ENCODE measurements at regions of chr2 and their contacts with region 1.

Region 1: GRCh38 chr2:215793747-215794595 is 219.4 kb downstream of the MREG start:
- DNase-seq: peak; percentile 100
- ATAC-seq: peak; percentile 86
- H3K4me3 ChIP-seq: peak overlapping the region in 1 of 3 experiments; percentile 1; a peak in 1 of 6 replicates
- H3K27ac ChIP-seq: peak overlapping the region; percentile 85
- H3K4me1 ChIP-seq: peaks cover 77% of the 10 kb centered on the region
- H3K27me3 ChIP-seq: no peaks in the 10 kb centered on the region
- CTCF ChIP-seq: no peak
- EP300 ChIP-seq: peak; percentile 64 to 99; a peak in 3 of 4 replicates
- POLR2A ChIP-seq: 0 out of 4 replicates have a peak, but pooled peaks of 1 of the 2 experiments have one; percentile 25
- RAD21 ChIP-seq: no peak

Region 2: GRCh38 chr2:215418064-215418963 is 375.7 kb before region 1 on chr2:
- CTCF ChIA-PET with region 1: no interaction called
- POLR2A ChIA-PET with region 1: interaction called, 6 read pairs
- in situ Hi-C with region 1: no loop called
- intact Hi-C with region 1: loop called (anchors 5 kb)
- DNase-seq: peak; percentile 89
- ATAC-seq: peak; percentile 42
- H3K4me3 ChIP-seq: peak overlapping the region; percentile 3 to 31 (median 13); a peak in 2 of 6 replicates
- H3K27ac ChIP-seq: peak overlapping the region; percentile 77
- H3K4me1 ChIP-seq: peaks cover 100% of the 10 kb centered on the region
- H3K27me3 ChIP-seq: no peaks in the 10 kb centered on the region
- CTCF ChIP-seq: no peak
- EP300 ChIP-seq: peak; percentile 45 to 94; a peak in 3 of 4 replicates
- POLR2A ChIP-seq: peak in 1 of 2 experiments; percentile 28; a peak in 1 of 4 replicates
- RAD21 ChIP-seq: no peak

Region 3: GRCh38 chr2:215454519-215455246 is 339.3 kb before region 1 on chr2:
- CTCF ChIA-PET with region 1: no interaction called
- POLR2A ChIA-PET with region 1: no interaction called
- in situ Hi-C with region 1: no loop called
- intact Hi-C with region 1: loop called (anchors 1 kb)
- DNase-seq: peak; percentile 52
- ATAC-seq: peak; percentile 50
- H3K4me3 ChIP-seq: no peak overlapping the region
- H3K27ac ChIP-seq: no peak overlapping the region
- H3K4me1 ChIP-seq: peaks cover 17% of the 10 kb centered on the region
- H3K27me3 ChIP-seq: no peaks in the 10 kb centered on the region
- CTCF ChIP-seq: peak; percentile 75
- EP300 ChIP-seq: peak in 1 of 2 experiments; percentile 55; a peak in 2 of 4 replicates
- POLR2A ChIP-seq: no peak
- RAD21 ChIP-seq: peak; percentile 42; the same call in 1 of the 2 replicates

Region 4: GRCh38 chr2:215680605-215681598 is 113.1 kb before region 1 on chr2:
- CTCF ChIA-PET with region 1: no interaction called
- POLR2A ChIA-PET with region 1: interaction called, 22 read pairs
- in situ Hi-C with region 1: loop called (anchors 5 kb)
- intact Hi-C with region 1: loop called (anchors 1 kb)
- DNase-seq: peak; percentile 100
- ATAC-seq: peak; percentile 97
- H3K4me3 ChIP-seq: 0 out of 6 replicates have a peak overlapping the region, but pooled peaks of 1 of the 3 experiments have one; percentile 11
- H3K27ac ChIP-seq: peak overlapping the region; percentile 89
- H3K4me1 ChIP-seq: peaks cover 87% of the 10 kb centered on the region
- H3K27me3 ChIP-seq: no peaks in the 10 kb centered on the region
- CTCF ChIP-seq: no peak
- EP300 ChIP-seq: peak; percentile 98 to 100
- POLR2A ChIP-seq: no peak
- RAD21 ChIP-seq: no peak; the same call in none of the 2 replicates

Region 5: DNA sequence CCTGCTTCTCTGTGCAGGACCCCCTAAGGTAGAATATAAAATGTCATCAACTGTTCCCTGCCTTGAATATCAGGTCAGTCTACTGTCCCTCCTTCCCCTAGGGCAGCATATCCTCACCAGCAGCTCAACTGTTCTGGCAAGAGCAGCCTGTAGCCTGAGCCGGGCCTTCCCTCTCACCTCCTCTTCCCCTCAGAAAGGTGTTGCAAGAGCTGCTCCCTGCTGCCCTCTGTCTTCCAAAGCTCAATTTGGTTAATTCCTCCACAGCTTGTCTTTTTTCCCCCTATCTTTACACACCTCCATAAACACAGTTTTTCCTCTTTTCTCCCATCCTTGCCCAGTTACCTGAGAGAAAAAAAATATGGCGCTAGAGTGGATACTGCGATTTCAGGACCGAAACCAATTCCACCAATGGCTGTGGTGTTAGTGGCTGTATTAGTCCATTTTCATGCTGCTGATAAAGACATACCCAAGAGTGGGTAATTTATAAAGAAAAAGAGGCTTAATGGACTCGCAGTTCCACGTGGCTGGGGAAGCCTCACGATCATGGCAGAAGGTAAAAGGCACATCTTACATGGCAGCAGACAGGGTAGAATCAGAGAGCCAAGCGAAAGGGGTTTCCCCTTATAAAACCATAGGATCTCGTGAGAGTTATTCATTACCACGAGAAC is 34.7 kb after region 1 on chr2:
- CTCF ChIA-PET with region 1: no interaction called
- POLR2A ChIA-PET with region 1: interaction called, 28 read pairs
- in situ Hi-C with region 1: no loop called
- intact Hi-C with region 1: loop called (anchors 2 kb)
- DNase-seq: peak; percentile 81
- ATAC-seq: peak; percentile 82
- H3K4me3 ChIP-seq: no peak overlapping the region
- H3K27ac ChIP-seq: peak overlapping the region; percentile 67
- H3K4me1 ChIP-seq: peaks cover 82% of the 10 kb centered on the region
- H3K27me3 ChIP-seq: no peaks in the 10 kb centered on the region
- CTCF ChIP-seq: peak; percentile 76
- EP300 ChIP-seq: peak in 1 of 2 experiments; percentile 62; a peak in 2 of 4 replicates
- POLR2A ChIP-seq: no peak
- RAD21 ChIP-seq: peak; percentile 69

Region 6: DNA sequence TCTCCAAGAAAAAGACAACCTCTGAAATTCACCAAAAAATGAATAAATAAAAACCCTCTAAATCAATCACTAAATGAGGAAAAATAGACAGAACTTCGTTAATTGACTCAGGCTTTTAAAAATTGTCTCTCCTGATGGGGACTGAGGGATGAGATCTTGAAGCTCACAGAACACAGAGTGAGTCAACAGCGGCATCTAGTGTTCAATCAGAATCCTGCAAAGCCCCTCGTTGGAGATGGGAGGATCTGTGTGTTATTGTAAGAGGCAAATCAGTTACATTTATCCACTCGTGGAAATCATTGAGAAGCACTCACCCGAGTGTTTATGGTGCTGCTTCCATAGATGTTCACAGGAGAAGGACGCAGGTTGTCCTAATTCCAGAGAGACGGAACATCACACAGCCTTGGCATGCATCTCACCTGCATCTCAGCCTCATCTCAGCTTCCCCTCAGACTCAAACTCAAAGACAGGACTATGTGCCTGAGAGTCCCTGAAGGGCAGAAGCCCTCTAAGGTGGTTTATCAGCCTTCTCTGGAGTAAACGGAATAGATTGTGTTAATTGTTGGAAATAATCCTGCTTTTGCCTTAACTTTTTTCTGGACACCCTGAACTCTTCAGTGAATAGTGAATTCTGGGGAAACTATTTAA is 137.4 kb after region 1 on chr2:
- CTCF ChIA-PET with region 1: interaction called, 3 read pairs
- POLR2A ChIA-PET with region 1: interaction called, 4 read pairs
- in situ Hi-C with region 1: no loop called
- intact Hi-C with region 1: loop called (anchors 1 kb)
- DNase-seq: peak; percentile 80
- ATAC-seq: peak; percentile 93
- H3K4me3 ChIP-seq: no peak overlapping the region
- H3K27ac ChIP-seq: no peak overlapping the region
- H3K4me1 ChIP-seq: peaks cover 34% of the 10 kb centered on the region
- H3K27me3 ChIP-seq: no peaks in the 10 kb centered on the region
- CTCF ChIP-seq: peak; percentile 95
- EP300 ChIP-seq: no peak
- POLR2A ChIP-seq: no peak
- RAD21 ChIP-seq: peak; percentile 93